ENCODE measurements at regions of chr2 and their contacts with region 1.

Region 1: GRCh38 chr2:176096986-176097819 is 2.4 kb upstream of the HOXD12 start:
- DNase-seq: peak; percentile 59 to 77
- ATAC-seq: peak; percentile 94

Region 2: GRCh38 chr2:175366815-175367214 is 730.4 kb before region 1 on chr2:
- intact Hi-C with region 1: loop called in 1 of 2 experiments (anchors 5 kb)
- DNase-seq: peak in 1 of 2 donors; percentile 13
- ATAC-seq: peak; percentile 78

Region 3: GRCh38 chr2:175684457-175684856 is 412.7 kb before region 1 on chr2:
- intact Hi-C with region 1: loop called in 1 of 2 experiments (anchors 10 kb)
- DNase-seq: no peak
- ATAC-seq: peak; percentile 30

Region 4: GRCh38 chr2:175690113-175690837 is 406.9 kb before region 1 on chr2:
- intact Hi-C with region 1: loop called (anchors 5 to 10 kb)
- DNase-seq: no peak
- ATAC-seq: peak; percentile 72